ENCODE measurements at regions of chr14 and their contacts with region 1.

Region 1: DNA sequence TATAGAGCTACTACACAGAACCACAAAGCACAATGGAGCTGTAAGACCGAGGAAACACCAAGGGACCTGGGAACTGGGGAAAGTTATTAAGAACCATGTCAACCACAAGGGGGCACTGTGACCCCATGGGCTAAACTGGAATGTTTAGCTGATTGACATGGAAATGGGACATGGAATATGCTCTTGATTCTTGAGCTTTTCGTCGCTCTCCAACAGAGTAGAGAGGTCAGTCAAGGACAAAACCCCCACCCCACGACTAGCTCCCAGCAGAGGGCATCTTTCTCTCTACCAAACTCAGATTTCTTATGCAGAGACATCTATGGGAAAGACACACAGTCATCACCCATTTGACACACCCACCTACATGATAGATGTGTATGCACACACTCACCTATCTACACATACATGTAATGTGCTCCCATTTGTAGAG is 10.1 kb downstream of the NDRG2 start:
- DNase-seq: peak; percentile 69 to 81 (median 76)
- H3K4me3 ChIP-seq: no peak overlapping the region
- H3K4me3 Mint-ChIP-seq: no peak overlapping the region
- H3K27ac ChIP-seq: no peak overlapping the region
- H3K27ac Mint-ChIP-seq: peak overlapping the region in 2 of 7 donors; percentile 63 to 72
- H3K4me1 ChIP-seq: no peaks in the 10 kb centered on the region
- H3K4me1 Mint-ChIP-seq: no peaks in the 10 kb centered on the region
- H3K27me3 ChIP-seq: peaks cover 5% of the 10 kb centered on the region
- H3K27me3 Mint-ChIP-seq: peaks cover 7 to 9% of the 10 kb centered on the region in 2 donors

Region 2: GRCh38 chr14:20998664-20999366 is 16.0 kb before region 1 on chr14 and contains the start of gene SLC39A2:
- CTCF ChIA-PET with region 1: interaction called, 57 read pairs
- POLR2A ChIA-PET with region 1: interaction called, 3 read pairs
- intact Hi-C with region 1: no loop called
- DNase-seq: no peak
- H3K4me3 ChIP-seq: no peak within 1 kb of the TSS
- H3K4me3 Mint-ChIP-seq: no peak within 1 kb of the TSS
- H3K27ac ChIP-seq: no peak within 1 kb of the TSS
- H3K27ac Mint-ChIP-seq: peak within 1 kb of the TSS in 4 of 7 donors; percentile 54 to 92 (median 74)
- H3K4me1 ChIP-seq: no peaks in the 10 kb centered on the region
- H3K4me1 Mint-ChIP-seq: peaks cover 7 to 17% (median 11%) of the 10 kb centered on the region in 4 donors
- H3K27me3 ChIP-seq: no peaks in the 10 kb centered on the region
- H3K27me3 Mint-ChIP-seq: no peaks in the 10 kb centered on the region
- total RNA-seq, gene SLC39A2: 0.67 TPM in 1 of 2 experiments, not detected in the other

Region 3: DNA sequence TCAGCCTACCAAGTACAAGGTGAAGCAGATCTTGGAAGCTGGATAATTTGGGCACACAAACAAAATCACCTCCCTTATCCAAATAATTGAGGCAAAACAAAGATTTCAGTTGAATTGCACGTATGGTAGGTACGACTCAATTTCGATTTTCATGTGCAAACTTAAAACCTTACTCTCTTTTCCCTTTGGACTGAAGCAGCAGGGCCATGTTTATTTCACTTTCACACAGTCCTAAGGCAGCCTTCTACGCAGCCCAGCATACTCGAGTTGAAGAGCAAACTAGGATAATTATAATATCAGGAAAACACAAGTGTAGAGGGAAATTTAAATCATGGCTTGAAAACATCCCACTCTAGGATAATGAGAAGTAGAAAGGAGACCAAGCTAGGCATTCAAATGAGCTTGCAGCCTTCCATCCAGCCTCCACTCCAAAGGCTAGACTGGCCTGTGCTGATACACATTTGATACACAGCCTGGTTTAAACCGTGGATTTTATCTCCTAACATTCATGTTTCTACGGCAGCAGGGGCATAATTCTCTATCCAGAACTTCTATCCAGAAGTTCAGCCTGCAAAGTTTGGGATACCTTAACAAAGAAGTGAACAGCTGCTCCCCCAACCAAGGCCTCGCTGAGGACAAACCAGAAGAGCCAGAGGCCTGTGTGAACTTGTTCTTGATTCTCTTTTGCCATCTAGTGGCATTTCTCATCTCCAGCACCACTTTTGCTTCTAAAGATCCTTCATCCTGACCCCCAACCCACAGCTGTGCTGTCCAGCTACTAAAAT is 25.0 kb after region 1 on chr14:
- CTCF ChIA-PET with region 1: interaction called, 349 read pairs
- POLR2A ChIA-PET with region 1: interaction called, 19 read pairs
- intact Hi-C with region 1: loop called (anchors 1 kb)
- DNase-seq: peak in 4 of 5 donors; percentile 40 to 51 (median 44)
- H3K4me3 ChIP-seq: no peak overlapping the region
- H3K4me3 Mint-ChIP-seq: no peak overlapping the region
- H3K27ac ChIP-seq: no peak overlapping the region
- H3K27ac Mint-ChIP-seq: peak overlapping the region in 2 of 7 donors; percentile 13 to 39
- H3K4me1 ChIP-seq: peaks cover 16% of the 10 kb centered on the region
- H3K4me1 Mint-ChIP-seq: peaks cover 9 to 35% (median 15%) of the 10 kb centered on the region in 4 donors
- H3K27me3 ChIP-seq: no peaks in the 10 kb centered on the region
- H3K27me3 Mint-ChIP-seq: no peaks in the 10 kb centered on the region

Region 4: GRCh38 chr14:21063479-21063878 is 48.7 kb after region 1 on chr14:
- CTCF ChIA-PET with region 1: interaction called, 44 read pairs
- POLR2A ChIA-PET with region 1: interaction called, 3 read pairs
- intact Hi-C with region 1: no loop called
- DNase-seq: no peak
- H3K4me3 ChIP-seq: no peak overlapping the region
- H3K4me3 Mint-ChIP-seq: no peak overlapping the region
- H3K27ac ChIP-seq: no peak overlapping the region
- H3K27ac Mint-ChIP-seq: no peak overlapping the region
- H3K4me1 ChIP-seq: peaks cover 2% of the 10 kb centered on the region
- H3K4me1 Mint-ChIP-seq: peaks cover 1 to 3% (median 2%) of the 10 kb centered on the region in 4 donors
- H3K27me3 ChIP-seq: peaks cover 10% of the 10 kb centered on the region
- H3K27me3 Mint-ChIP-seq: peaks cover 36 to 45% of the 10 kb centered on the region in 2 donors

Region 5: GRCh38 chr14:21092273-21093011 is 77.7 kb after region 1 on chr14:
- CTCF ChIA-PET with region 1: interaction called, 226 read pairs
- POLR2A ChIA-PET with region 1: interaction called, 16 read pairs
- intact Hi-C with region 1: loop called (anchors 1 kb)
- DNase-seq: peak; percentile 86 to 91 (median 90)
- H3K4me3 ChIP-seq: no peak overlapping the region
- H3K4me3 Mint-ChIP-seq: peak overlapping the region in 2 of 8 donors; percentile 2 to 72
- H3K27ac ChIP-seq: peak overlapping the region; percentile 17
- H3K27ac Mint-ChIP-seq: peak overlapping the region in 6 of 7 donors; percentile 79 to 97 (median 94)
- H3K4me1 ChIP-seq: peaks cover 21% of the 10 kb centered on the region
- H3K4me1 Mint-ChIP-seq: peaks cover 17 to 50% (median 29%) of the 10 kb centered on the region in 4 donors
- H3K27me3 ChIP-seq: no peaks in the 10 kb centered on the region
- H3K27me3 Mint-ChIP-seq: no peaks in the 10 kb centered on the region

Measured in CD4-positive, alpha-beta memory T cell (primary cell).